GM12878 (cell line): ENCODE measurements at regions of chr7 and their contacts with region 1.

Region 1: DNA sequence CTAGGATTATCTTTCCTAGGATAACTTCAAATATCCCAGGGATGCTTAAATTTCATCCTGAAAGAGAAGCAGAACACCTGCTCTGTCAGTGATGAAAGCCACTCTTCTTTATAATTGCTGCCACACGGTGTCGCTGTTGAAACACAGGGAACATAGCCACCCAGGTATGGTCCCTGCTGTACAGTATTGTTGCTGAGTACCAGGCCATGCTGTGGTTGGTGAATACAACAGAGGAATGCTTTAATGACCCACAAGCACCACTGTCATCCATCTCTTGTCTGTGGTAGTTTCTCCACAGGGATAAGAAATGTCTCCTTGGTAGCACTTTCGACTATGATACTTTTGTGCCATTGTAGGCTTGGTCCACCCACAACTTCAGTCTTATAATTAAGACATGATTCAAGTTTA is 70.6 kb upstream of the STARD3NL start:
- DNase-seq: peak; percentile 44
- ATAC-seq: peak; percentile 97
- H3K4me3 ChIP-seq: no peak overlapping the region
- H3K27ac ChIP-seq: no peak overlapping the region
- H3K4me1 ChIP-seq: no peaks in the 10 kb centered on the region; the same call in 1 of the 2 replicates
- H3K27me3 ChIP-seq: no peaks in the 10 kb centered on the region
- CTCF ChIP-seq: peak; percentile 76 to 93 (median 81)
- EP300 ChIP-seq: no peak
- POLR2A ChIP-seq: no peak
- RAD21 ChIP-seq: peak; percentile 99

Region 2: DNA sequence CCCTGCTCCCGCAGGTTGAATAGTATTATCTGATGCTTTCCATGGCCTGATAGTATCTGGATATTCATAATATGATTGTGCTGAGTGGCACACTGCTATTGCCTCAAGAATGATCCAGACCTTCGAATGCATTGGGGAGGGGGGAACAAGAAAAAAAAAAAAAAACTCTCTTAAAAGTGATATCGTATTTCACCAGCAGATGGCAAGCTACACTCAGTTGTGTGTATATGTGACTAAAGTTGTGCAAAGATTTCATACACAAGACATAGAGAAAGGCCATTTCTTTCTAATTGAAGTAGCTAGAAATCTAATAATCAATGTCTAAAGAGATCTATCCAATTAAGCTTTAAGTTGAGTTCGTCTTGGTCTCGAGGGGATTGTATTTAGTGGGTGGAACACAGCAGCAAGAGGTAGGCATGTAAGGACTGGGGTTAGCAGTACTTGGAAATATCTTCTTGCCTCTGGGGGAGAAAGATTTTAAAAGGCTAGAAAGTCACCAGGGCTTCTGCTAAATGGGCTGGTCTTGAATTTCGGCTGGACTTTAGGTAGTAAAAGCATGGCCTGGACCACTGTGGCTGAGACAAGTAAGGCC is 206.2 kb before region 1 on chr7:
- CTCF ChIA-PET with region 1: interaction called, 25 read pairs
- POLR2A ChIA-PET with region 1: no interaction called
- RAD21 ChIA-PET with region 1: interaction called, 6 read pairs
- SMC1A ChIA-PET with region 1: interaction called, 28 read pairs
- in situ Hi-C with region 1: no loop called
- intact Hi-C with region 1: loop called (anchors 1 kb)
- DNase-seq: no peak
- ATAC-seq: peak; percentile 78
- H3K4me3 ChIP-seq: no peak overlapping the region
- H3K27ac ChIP-seq: no peak overlapping the region
- H3K4me1 ChIP-seq: no peaks in the 10 kb centered on the region
- H3K27me3 ChIP-seq: peaks cover 0 to 2% of the 10 kb centered on the region in 2 experiments; a peak in 1 of 4 replicates
- CTCF ChIP-seq: peak; percentile 47 to 59 (median 50); a peak in 5 of 6 replicates
- EP300 ChIP-seq: no peak
- POLR2A ChIP-seq: no peak
- RAD21 ChIP-seq: peak; percentile 64

Region 3: DNA sequence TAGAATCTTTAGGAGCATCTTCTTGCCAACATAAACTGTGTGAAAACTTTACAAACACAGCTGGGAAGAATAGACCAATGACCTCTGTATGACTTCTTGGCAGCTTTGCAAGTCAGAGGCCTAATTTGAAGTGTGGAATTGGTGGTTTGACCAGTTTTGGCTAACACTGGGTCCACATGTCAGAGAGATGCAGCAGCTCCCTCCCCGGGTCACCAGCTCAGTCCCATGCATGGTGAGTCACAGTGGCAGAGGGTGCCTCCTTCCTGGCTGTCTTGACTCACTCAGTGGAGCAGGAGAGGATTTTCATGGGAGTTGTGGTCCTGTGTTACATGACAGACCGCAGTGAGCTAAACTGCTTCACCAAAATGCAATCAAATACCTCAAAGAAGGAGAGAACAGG is 62.4 kb after region 1 on chr7:
- CTCF ChIA-PET with region 1: interaction called, 19 read pairs
- POLR2A ChIA-PET with region 1: no interaction called
- RAD21 ChIA-PET with region 1: interaction called, 20 read pairs
- SMC1A ChIA-PET with region 1: interaction called, 64 read pairs
- in situ Hi-C with region 1: no loop called
- intact Hi-C with region 1: no loop called
- DNase-seq: peak; percentile 85
- ATAC-seq: peak; percentile 82
- H3K4me3 ChIP-seq: 0 out of 2 replicates have a peak overlapping the region, but pooled peaks have one; percentile 6
- H3K27ac ChIP-seq: peak overlapping the region; percentile 57
- H3K4me1 ChIP-seq: peaks cover 34% of the 10 kb centered on the region
- H3K27me3 ChIP-seq: no peaks in the 10 kb centered on the region
- CTCF ChIP-seq: no peak
- EP300 ChIP-seq: peak; percentile 38 to 83; a peak in 3 of 4 replicates
- POLR2A ChIP-seq: no peak
- RAD21 ChIP-seq: no peak

Region 4: DNA sequence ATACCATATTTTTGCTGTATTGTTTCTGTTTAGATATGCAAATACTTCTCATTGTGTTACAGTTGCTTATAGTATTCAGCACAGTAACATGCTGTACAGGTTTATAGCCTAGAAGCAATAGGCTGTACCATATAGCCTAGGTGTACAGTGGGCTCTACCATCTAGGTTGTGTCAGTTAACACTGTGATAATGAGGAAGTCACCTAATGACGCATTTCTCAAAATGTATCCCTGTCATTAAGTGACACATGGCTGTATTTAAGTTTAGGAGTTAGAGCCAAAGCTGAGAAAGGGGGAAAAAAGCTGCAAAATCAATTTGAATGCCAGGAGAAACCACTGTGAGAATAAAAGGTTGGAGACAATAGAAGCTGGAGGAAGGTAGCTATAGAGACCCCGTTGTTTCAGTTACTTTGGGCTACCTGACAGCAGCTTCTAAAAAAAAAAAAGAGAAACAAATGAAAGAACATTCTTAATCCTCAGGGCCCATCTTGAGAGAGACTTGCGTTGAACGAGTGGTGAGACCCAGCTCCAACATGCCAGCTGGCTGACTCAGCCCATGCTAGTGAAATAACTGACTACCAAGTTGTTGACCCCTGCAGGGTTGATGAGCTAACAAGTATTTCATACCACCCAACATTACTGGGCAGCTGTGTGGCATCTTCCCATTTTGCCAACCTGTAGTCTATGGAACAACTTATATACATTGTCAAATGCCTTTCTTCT is 79.3 kb after region 1 on chr7:
- CTCF ChIA-PET with region 1: interaction called, 25 read pairs
- POLR2A ChIA-PET with region 1: no interaction called
- RAD21 ChIA-PET with region 1: interaction called, 10 read pairs
- SMC1A ChIA-PET with region 1: interaction called, 19 read pairs
- in situ Hi-C with region 1: no loop called
- intact Hi-C with region 1: no loop called
- DNase-seq: no peak
- ATAC-seq: peak; percentile 55
- H3K4me3 ChIP-seq: no peak overlapping the region
- H3K27ac ChIP-seq: no peak overlapping the region
- H3K4me1 ChIP-seq: peaks cover 39% of the 10 kb centered on the region
- H3K27me3 ChIP-seq: no peaks in the 10 kb centered on the region
- CTCF ChIP-seq: no peak
- EP300 ChIP-seq: no peak
- POLR2A ChIP-seq: no peak
- RAD21 ChIP-seq: no peak

Region 5: GRCh38 chr7:38222481-38223096 is 115.1 kb after region 1 on chr7:
- CTCF ChIA-PET with region 1: interaction called, 333 read pairs
- POLR2A ChIA-PET with region 1: interaction called, 7 read pairs
- RAD21 ChIA-PET with region 1: interaction called, 159 read pairs
- SMC1A ChIA-PET with region 1: interaction called, 211 read pairs
- in situ Hi-C with region 1: loop called (anchors 5 kb)
- intact Hi-C with region 1: loop called (anchors 1 kb)
- DNase-seq: peak; percentile 34
- ATAC-seq: peak; percentile 87
- H3K4me3 ChIP-seq: no peak overlapping the region
- H3K27ac ChIP-seq: no peak overlapping the region
- H3K4me1 ChIP-seq: no peaks in the 10 kb centered on the region
- H3K27me3 ChIP-seq: no peaks in the 10 kb centered on the region
- CTCF ChIP-seq: peak; percentile 72 to 79 (median 79)
- EP300 ChIP-seq: no peak
- POLR2A ChIP-seq: no peak
- RAD21 ChIP-seq: peak; percentile 97

Region 6: GRCh38 chr7:38318803-38319416 is 211.4 kb after region 1 on chr7:
- CTCF ChIA-PET with region 1: interaction called, 93 read pairs
- POLR2A ChIA-PET with region 1: no interaction called
- RAD21 ChIA-PET with region 1: interaction called, 25 read pairs
- SMC1A ChIA-PET with region 1: interaction called, 59 read pairs
- in situ Hi-C with region 1: loop called (anchors 5 kb)
- intact Hi-C with region 1: loop called (anchors 1 kb)
- DNase-seq: no peak
- ATAC-seq: peak; percentile 96
- H3K4me3 ChIP-seq: no peak overlapping the region
- H3K27ac ChIP-seq: no peak overlapping the region
- H3K4me1 ChIP-seq: no peaks in the 10 kb centered on the region
- H3K27me3 ChIP-seq: no peaks in the 10 kb centered on the region
- CTCF ChIP-seq: peak; percentile 74 to 88 (median 82)
- EP300 ChIP-seq: no peak
- POLR2A ChIP-seq: no peak
- RAD21 ChIP-seq: peak; percentile 93